ENCODE measurements at regions of chr18 and their contacts with region 1.

Region 1: DNA sequence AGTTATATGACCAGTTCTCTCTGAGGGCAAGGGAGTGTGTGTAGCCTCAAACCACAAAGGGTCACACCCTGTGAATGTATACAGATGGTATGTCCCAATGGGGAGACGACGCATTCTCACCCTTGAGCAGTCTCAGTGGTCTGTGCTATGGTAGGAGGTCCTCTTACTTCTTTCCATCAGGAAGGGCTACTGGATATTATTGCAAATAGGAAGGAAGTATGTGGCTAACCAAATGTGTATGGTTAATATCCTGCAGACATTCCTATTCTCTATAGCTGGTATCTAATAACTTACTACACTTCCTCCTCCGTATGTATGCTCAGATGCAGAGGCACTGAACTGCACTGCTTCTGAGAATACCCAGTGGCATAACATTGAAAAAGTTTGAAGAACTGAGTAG is 306.7 kb upstream of the CCDC68 start:
- DNase-seq: peak; percentile 59
- ATAC-seq: peak; percentile 68
- H3K4me3 ChIP-seq: no peak overlapping the region
- H3K27ac ChIP-seq: peak overlapping the region; percentile 93
- H3K4me1 ChIP-seq: peaks cover 61% of the 10 kb centered on the region
- H3K27me3 ChIP-seq: no peaks in the 10 kb centered on the region
- CTCF ChIP-seq: no peak
- EP300 ChIP-seq: no peak
- POLR2A ChIP-seq: no peak
- RAD21 ChIP-seq: no peak

Region 2: GRCh38 chr18:55243857-55244256 is 22.1 kb before region 1 on chr18:
- CTCF ChIA-PET with region 1: interaction called, 50 read pairs
- POLR2A ChIA-PET with region 1: interaction called, 70 read pairs
- RAD21 ChIA-PET with region 1: interaction called, 93 read pairs
- SMC1A ChIA-PET with region 1: interaction called, 177 read pairs
- in situ Hi-C with region 1: no loop called
- intact Hi-C with region 1: loop called (anchors 1 kb)
- DNase-seq: no peak
- ATAC-seq: no peak
- H3K4me3 ChIP-seq: no peak overlapping the region
- H3K27ac ChIP-seq: no peak overlapping the region
- H3K4me1 ChIP-seq: peaks cover 44% of the 10 kb centered on the region
- H3K27me3 ChIP-seq: no peaks in the 10 kb centered on the region
- CTCF ChIP-seq: no peak
- EP300 ChIP-seq: no peak
- POLR2A ChIP-seq: no peak
- RAD21 ChIP-seq: no peak

Region 3: GRCh38 chr18:55280503-55280902 is 14.5 kb after region 1 on chr18:
- CTCF ChIA-PET with region 1: interaction called, 22 read pairs
- POLR2A ChIA-PET with region 1: interaction called, 14 read pairs
- RAD21 ChIA-PET with region 1: interaction called, 50 read pairs
- SMC1A ChIA-PET with region 1: interaction called, 95 read pairs
- in situ Hi-C with region 1: no loop called
- intact Hi-C with region 1: no loop called
- DNase-seq: no peak
- ATAC-seq: no peak
- H3K4me3 ChIP-seq: no peak overlapping the region
- H3K27ac ChIP-seq: peak overlapping the region; percentile 26; the same call in 1 of the 2 replicates
- H3K4me1 ChIP-seq: peaks cover 10% of the 10 kb centered on the region; the same call in 1 of the 2 replicates
- H3K27me3 ChIP-seq: no peaks in the 10 kb centered on the region
- CTCF ChIP-seq: no peak
- EP300 ChIP-seq: no peak
- POLR2A ChIP-seq: no peak
- RAD21 ChIP-seq: no peak

Region 4: DNA sequence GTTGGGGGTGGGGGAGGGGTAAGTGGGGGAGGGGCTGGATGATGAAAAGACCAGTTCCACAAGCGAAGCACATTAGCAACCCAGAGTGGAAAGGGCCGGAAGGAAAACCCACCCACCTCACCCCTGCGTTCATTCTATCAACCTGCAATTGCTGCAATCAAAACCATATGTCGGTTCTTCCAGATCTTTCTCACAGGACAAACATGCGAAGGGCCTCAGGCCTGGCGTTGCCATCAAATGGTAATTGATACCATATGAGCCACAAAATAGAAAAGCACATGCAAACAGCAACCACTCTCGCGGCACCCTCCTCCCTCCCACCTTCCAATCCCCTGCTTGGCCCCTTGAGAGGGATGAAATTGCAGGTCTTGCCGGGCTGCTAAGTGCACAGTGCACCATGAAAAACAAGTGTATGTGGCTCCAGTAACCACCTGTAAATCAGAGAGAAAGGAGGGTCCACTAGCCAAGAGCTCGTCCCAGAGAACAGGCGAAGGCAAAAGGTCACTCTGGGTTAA is 34.5 kb after region 1 on chr18:
- CTCF ChIA-PET with region 1: interaction called, 30 read pairs
- POLR2A ChIA-PET with region 1: interaction called, 3 read pairs
- RAD21 ChIA-PET with region 1: interaction called, 20 read pairs
- SMC1A ChIA-PET with region 1: interaction called, 55 read pairs
- in situ Hi-C with region 1: no loop called
- intact Hi-C with region 1: no loop called
- DNase-seq: no peak
- ATAC-seq: no peak
- H3K4me3 ChIP-seq: peak overlapping the region; percentile 18; the same call in 1 of the 2 replicates
- H3K27ac ChIP-seq: no peak overlapping the region
- H3K4me1 ChIP-seq: peaks cover 27% of the 10 kb centered on the region
- H3K27me3 ChIP-seq: no peaks in the 10 kb centered on the region
- CTCF ChIP-seq: no peak
- EP300 ChIP-seq: no peak
- POLR2A ChIP-seq: no peak
- RAD21 ChIP-seq: no peak

Region 5: GRCh38 chr18:55489034-55489986 is 223.3 kb after region 1 on chr18:
- CTCF ChIA-PET with region 1: no interaction called
- POLR2A ChIA-PET with region 1: no interaction called
- RAD21 ChIA-PET with region 1: no interaction called
- SMC1A ChIA-PET with region 1: no interaction called
- in situ Hi-C with region 1: no loop called
- intact Hi-C with region 1: no loop called
- DNase-seq: peak; percentile 8
- ATAC-seq: peak; percentile 76
- H3K4me3 ChIP-seq: no peak overlapping the region
- H3K27ac ChIP-seq: no peak overlapping the region
- H3K4me1 ChIP-seq: peaks cover 10% of the 10 kb centered on the region
- H3K27me3 ChIP-seq: no peaks in the 10 kb centered on the region
- CTCF ChIP-seq: no peak
- EP300 ChIP-seq: peak in 1 of 2 experiments; percentile 53; a peak in 1 of 4 replicates
- POLR2A ChIP-seq: no peak
- RAD21 ChIP-seq: no peak